Heart right ventricle (tissue), 16 donors: ENCODE measurements at regions of chr1 and their contacts with region 1.

Region 1: GRCh38 chr1:29124366-29125236 is 898 bp upstream of the TMEM200B start:
- DNase-seq: peak; percentile 83 to 90
- ATAC-seq: peak; percentile 73 to 84 (median 82)
- H3K4me3 ChIP-seq: peak overlapping the region; percentile 59 to 99 (median 70)
- H3K27ac ChIP-seq: peak overlapping the region; percentile 81 to 97 (median 90)
- H3K4me1 ChIP-seq: peaks cover 8 to 36% (median 28%) of the 10 kb centered on the region in 9 donors
- H3K27me3 ChIP-seq: peaks cover 0 to 63% (median 18%) of the 10 kb centered on the region in 7 donors
- CTCF ChIP-seq: peak; percentile 54 to 80 (median 76)

Region 2: GRCh38 chr1:28886731-28887418 is 237.7 kb before region 1 on chr1:
- intact Hi-C with region 1: loop called in 1 of 10 experiments (anchors 5 kb)
- DNase-seq: peak; percentile 80 to 86
- ATAC-seq: peak; percentile 79 to 89 (median 84)
- H3K4me3 ChIP-seq: peak overlapping the region; percentile 53 to 99 (median 88)
- H3K27ac ChIP-seq: peak overlapping the region; percentile 34 to 93 (median 86)
- H3K4me1 ChIP-seq: peaks cover 0 to 45% (median 16%) of the 10 kb centered on the region in 9 donors
- H3K27me3 ChIP-seq: peaks cover 0 to 6% (median 0%) of the 10 kb centered on the region in 7 donors
- CTCF ChIP-seq: no peak

Region 3: DNA sequence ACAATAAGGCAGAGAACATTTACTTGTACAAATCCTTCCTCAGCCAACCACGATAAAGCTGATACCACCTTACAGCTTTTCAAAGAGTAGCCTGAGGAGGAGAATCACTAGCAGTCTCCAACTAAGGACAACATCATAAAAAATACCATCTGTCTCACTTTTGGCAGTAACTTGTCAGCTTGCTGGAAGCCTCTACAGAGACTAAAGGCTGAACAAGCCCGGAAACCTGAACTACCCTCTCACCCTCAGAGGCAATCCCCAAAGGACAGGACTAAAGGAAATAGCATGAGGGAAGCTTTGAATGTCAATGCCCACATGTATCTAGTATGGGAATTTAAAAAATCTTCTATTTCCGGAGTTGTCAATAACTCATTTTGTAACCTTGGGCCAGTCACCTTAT is 46.5 kb after region 1 on chr1:
- intact Hi-C with region 1: loop called in 1 of 10 experiments (anchors 10 kb)
- DNase-seq: no peak
- ATAC-seq: peak in 2 of 8 donors; percentile 9 to 44
- H3K4me3 ChIP-seq: no peak overlapping the region
- H3K27ac ChIP-seq: peak overlapping the region in 2 of 10 donors; percentile 9 to 32
- H3K4me1 ChIP-seq: peaks cover 6 to 74% (median 45%) of the 10 kb centered on the region in 9 donors
- H3K27me3 ChIP-seq: no peaks in the 10 kb centered on the region
- CTCF ChIP-seq: no peak

Region 4: GRCh38 chr1:29181413-29182225 is 57.0 kb after region 1 on chr1 and contains the start of gene SRSF4:
- intact Hi-C with region 1: loop called in 6 of 10 experiments (anchors 2 to 10 kb)
- DNase-seq: peak; percentile 99 to 100
- ATAC-seq: peak; percentile 96 to 97 (median 96)
- H3K4me3 ChIP-seq: peak within 1 kb of the TSS; percentile 83 to 99 (median 91)
- H3K27ac ChIP-seq: peak within 1 kb of the TSS; percentile 99 to 100 (median 100)
- H3K4me1 ChIP-seq: peaks cover 2 to 54% (median 43%) of the 10 kb centered on the region in 9 donors
- H3K27me3 ChIP-seq: no peaks in the 10 kb centered on the region
- CTCF ChIP-seq: peak; percentile 35 to 93 (median 84)
- total RNA-seq, gene SRSF4: 40.8 to 67.8 (median 49.0) TPM

Region 5: GRCh38 chr1:29249170-29249691 is 124.6 kb after region 1 on chr1:
- intact Hi-C with region 1: no loop called
- DNase-seq: no peak
- ATAC-seq: no peak
- H3K4me3 ChIP-seq: no peak overlapping the region
- H3K27ac ChIP-seq: no peak overlapping the region
- H3K4me1 ChIP-seq: no peaks in the 10 kb centered on the region
- H3K27me3 ChIP-seq: no peaks in the 10 kb centered on the region
- CTCF ChIP-seq: no peak